B cell (primary cell): ENCODE measurements at regions of chr1 and their contacts with region 1.

Region 1: GRCh38 chr1:173946380-173946921 is 29.3 kb upstream of the SERPINC1 start:
- DNase-seq: no peak
- ATAC-seq: no peak
- H3K4me3 ChIP-seq: no peak overlapping the region
- H3K4me3 Mint-ChIP-seq: no peak overlapping the region
- H3K27ac ChIP-seq: no peak overlapping the region
- H3K27ac Mint-ChIP-seq: no peak overlapping the region
- H3K4me1 ChIP-seq: no peaks in the 10 kb centered on the region
- H3K4me1 Mint-ChIP-seq: no peaks in the 10 kb centered on the region
- H3K27me3 ChIP-seq: no peaks in the 10 kb centered on the region
- H3K27me3 Mint-ChIP-seq: no peaks in the 10 kb centered on the region
- CTCF ChIP-seq: no peak

Region 2: GRCh38 chr1:173733912-173734311 is 212.5 kb before region 1 on chr1:
- CTCF ChIA-PET with region 1: no interaction called
- POLR2A ChIA-PET with region 1: no interaction called
- intact Hi-C with region 1: no loop called
- DNase-seq: no peak
- ATAC-seq: no peak
- H3K4me3 ChIP-seq: no peak overlapping the region
- H3K4me3 Mint-ChIP-seq: no peak overlapping the region
- H3K27ac ChIP-seq: no peak overlapping the region
- H3K27ac Mint-ChIP-seq: no peak overlapping the region
- H3K4me1 ChIP-seq: no peaks in the 10 kb centered on the region
- H3K4me1 Mint-ChIP-seq: peaks cover 20% of the 10 kb centered on the region
- H3K27me3 ChIP-seq: no peaks in the 10 kb centered on the region
- H3K27me3 Mint-ChIP-seq: no peaks in the 10 kb centered on the region
- CTCF ChIP-seq: no peak

Region 3: GRCh38 chr1:173960625-173961024 is 14.2 kb after region 1 on chr1:
- CTCF ChIA-PET with region 1: no interaction called
- POLR2A ChIA-PET with region 1: no interaction called
- intact Hi-C with region 1: loop called (anchors 2 kb)
- DNase-seq: no peak
- ATAC-seq: no peak
- H3K4me3 ChIP-seq: no peak overlapping the region
- H3K4me3 Mint-ChIP-seq: no peak overlapping the region
- H3K27ac ChIP-seq: no peak overlapping the region
- H3K27ac Mint-ChIP-seq: no peak overlapping the region
- H3K4me1 ChIP-seq: no peaks in the 10 kb centered on the region
- H3K4me1 Mint-ChIP-seq: no peaks in the 10 kb centered on the region
- H3K27me3 ChIP-seq: no peaks in the 10 kb centered on the region
- H3K27me3 Mint-ChIP-seq: no peaks in the 10 kb centered on the region
- CTCF ChIP-seq: no peak